Dorsolateral prefrontal cortex (tissue), 120 donors: ENCODE measurements at regions of chr6 and their contacts with region 1.

Region 1: DNA sequence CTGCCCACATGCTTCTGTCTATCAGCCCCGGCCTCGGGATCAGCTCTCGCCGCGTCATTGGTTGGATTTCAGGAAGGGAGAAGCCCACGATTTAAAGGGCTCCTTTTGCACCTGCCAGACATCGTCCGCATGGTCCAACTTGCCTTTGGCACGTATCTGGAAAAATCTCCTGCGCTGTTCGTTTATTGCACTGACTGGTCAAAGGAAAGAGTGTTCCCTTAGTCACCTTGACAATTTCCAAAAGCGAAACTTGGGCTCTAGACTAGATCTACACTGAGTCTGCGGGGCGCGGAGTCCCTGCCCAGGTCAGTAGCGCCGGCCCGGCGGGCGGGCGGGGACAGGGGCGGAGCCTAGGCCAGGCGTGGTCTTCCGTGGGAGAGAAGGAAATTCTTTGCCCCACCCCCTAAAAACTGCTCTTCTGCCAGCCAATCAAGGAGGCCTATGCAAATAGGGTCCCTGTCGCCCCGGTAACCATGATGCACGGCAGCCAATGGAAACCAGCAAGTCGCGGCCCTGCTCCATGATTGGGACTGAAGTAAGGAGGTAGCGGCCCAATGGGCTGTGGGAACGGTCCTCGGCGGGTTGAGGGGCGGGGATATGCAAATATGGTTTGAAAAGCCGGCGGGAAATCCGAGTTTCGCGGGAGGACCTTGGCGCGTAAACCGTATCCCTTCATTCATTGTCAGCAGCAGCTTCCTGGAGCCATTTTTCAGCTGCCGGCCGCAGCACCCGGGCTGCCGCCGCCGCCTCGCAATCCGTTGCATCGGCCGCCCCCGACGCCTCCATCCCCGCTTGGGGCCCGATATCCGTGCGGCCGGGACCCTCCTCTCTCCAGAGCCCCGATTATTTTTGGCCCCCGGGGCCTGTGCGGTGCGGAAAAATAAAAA is at the start of gene E2F3:
- DNase-seq: peak; percentile 93 to 100 (median 99)
- H3K4me3 ChIP-seq: peak within 1 kb of the TSS; percentile 50 to 88 (median 71)
- H3K27ac ChIP-seq: peak within 1 kb of the TSS in 54 of 59 donors; percentile 6 to 91 (median 76)
- H3K27me3 ChIP-seq: no peaks in the 10 kb centered on the region
- CTCF ChIP-seq: peak in 1 of 56 donors; percentile 20
- total RNA-seq, gene E2F3: 5.6 to 18.0 (median 10.5) TPM

Region 2: DNA sequence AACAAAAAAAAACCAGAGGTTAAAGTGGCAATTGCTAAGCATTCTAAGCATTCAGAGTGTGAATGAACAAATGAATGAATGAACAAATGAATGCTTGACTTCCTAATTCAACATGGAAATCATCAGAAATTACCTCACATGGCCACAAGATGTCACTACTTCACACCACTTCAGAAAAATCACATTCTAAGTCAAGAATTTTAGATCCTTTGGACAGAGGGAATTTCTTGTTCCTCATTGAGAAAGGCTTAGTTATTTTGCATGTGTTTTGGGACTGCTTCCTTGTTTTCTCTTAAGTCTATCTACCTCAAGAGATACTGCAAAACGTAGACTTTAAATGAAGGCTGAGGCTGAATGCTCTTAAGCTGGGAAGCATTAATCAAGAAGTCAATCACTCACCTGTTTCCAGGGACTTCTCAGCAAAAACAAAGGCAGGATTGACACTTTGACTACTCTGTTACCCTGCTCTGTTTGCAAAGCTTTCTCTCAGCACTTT is 309.3 kb before region 1 on chr6:
- intact Hi-C with region 1: loop called in 1 of 2 experiments (anchors 10 kb)
- DNase-seq: no peak
- H3K4me3 ChIP-seq: no peak overlapping the region
- H3K27ac ChIP-seq: no peak overlapping the region
- H3K27me3 ChIP-seq: no peaks in the 10 kb centered on the region
- CTCF ChIP-seq: peak; percentile 72 to 92 (median 83)

Region 3: GRCh38 chr6:20291764-20292580 is 109.5 kb before region 1 on chr6:
- intact Hi-C with region 1: loop called in 1 of 2 experiments (anchors 10 kb)
- DNase-seq: peak in 9 of 10 donors; percentile 34 to 84 (median 69)
- H3K4me3 ChIP-seq: peak overlapping the region in 6 of 59 donors; percentile 1 to 12 (median 6)
- H3K27ac ChIP-seq: no peak overlapping the region
- H3K27me3 ChIP-seq: no peaks in the 10 kb centered on the region
- CTCF ChIP-seq: peak; percentile 83 to 98 (median 95)

Region 4: GRCh38 chr6:20534295-20535262 is 133.1 kb after region 1 on chr6 and contains the start of gene CDKAL1:
- intact Hi-C with region 1: loop called (anchors 1 to 5 kb)
- DNase-seq: peak; percentile 80 to 95 (median 90)
- H3K4me3 ChIP-seq: peak within 1 kb of the TSS; percentile 53 to 99 (median 85)
- H3K27ac ChIP-seq: peak within 1 kb of the TSS in 54 of 59 donors; percentile 12 to 92 (median 77)
- H3K27me3 ChIP-seq: peaks cover 0 to 3% (median 0%) of the 10 kb centered on the region in 45 donors
- CTCF ChIP-seq: peak in 45 of 56 donors; percentile 14 to 68 (median 38)
- total RNA-seq, gene CDKAL1: 11.4 to 19.5 (median 15.0) TPM